ENCODE measurements at regions of chr17 and their contacts with region 1.

Region 1: DNA sequence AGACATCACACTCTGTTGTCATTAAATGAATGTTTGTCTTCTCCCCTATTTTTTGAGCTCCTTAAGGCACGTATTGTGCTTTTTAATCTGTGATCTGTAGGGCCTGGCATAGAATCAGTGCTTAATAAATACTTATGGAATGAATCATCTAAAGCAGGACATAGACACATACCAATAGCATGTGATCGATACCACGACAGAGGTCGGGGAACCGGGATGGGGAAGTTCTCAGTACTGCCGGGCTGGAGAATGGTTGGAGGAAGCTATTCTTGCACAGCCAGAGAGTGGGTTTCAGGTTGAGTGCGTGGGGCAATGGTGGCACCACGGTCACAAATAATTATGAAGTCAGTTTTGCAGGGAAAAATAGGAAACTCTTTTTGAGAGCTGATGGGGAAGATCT is 26.8 kb downstream of the NLRP1 start:
- DNase-seq: no peak
- H3K4me3 ChIP-seq: no peak overlapping the region
- H3K4me1 ChIP-seq: no peaks in the 10 kb centered on the region
- H3K27me3 ChIP-seq: peaks cover 3% of the 10 kb centered on the region; the same call in 1 of the 2 replicates

Region 2: DNA sequence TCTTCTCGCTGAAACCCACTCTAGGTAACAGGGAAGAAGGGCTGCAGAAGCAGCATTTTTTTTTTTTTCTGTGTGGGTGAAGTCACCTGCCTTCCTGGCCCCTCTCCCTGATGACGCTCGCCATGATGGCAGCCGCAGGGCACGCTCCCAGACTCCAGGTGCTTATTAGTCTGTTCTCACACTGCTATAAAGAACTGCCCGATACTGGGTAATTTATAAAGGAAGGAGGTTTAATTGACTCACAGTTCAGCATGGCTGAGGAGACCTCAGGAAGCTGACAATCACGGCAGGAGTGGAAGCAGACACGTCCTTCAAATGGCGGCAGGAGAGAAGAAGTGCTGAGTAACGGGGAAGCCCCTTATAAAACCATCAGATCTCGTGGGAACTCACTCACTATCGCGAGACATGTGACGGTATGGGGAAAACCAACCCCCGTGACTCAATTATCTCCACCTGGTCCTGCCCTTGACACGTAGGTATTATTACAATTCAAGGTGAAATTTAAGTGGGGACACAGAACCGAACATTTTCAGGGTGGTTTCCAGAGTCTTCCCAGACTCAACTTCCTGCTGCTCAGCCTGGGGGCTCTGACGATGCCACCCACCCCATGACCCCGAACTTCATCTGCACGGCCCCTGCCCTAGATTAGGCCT is 61.7 kb after region 1 on chr17:
- in situ Hi-C with region 1: loop called (anchors 10 kb)
- DNase-seq: no peak
- H3K4me3 ChIP-seq: no peak overlapping the region
- H3K4me1 ChIP-seq: no peaks in the 10 kb centered on the region
- H3K27me3 ChIP-seq: no peaks in the 10 kb centered on the region

Measured in HAP-1 (cell line).